Transverse colon (tissue), 4 donors: ENCODE measurements at regions of chr18 and their contacts with region 1.

Region 1: GRCh38 chr18:36977121-36977520 is 148.2 kb downstream of the KIAA1328 start:
- DNase-seq: no peak
- H3K4me3 ChIP-seq: no peak overlapping the region
- H3K27ac ChIP-seq: no peak overlapping the region
- H3K4me1 ChIP-seq: no peaks in the 10 kb centered on the region
- H3K27me3 ChIP-seq: no peaks in the 10 kb centered on the region
- CTCF ChIP-seq: no peak
- EP300 ChIP-seq: no peak
- POLR2A ChIP-seq: no peak

Region 2: GRCh38 chr18:35892118-35892517 is 1085.0 kb before region 1 on chr18:
- in situ Hi-C with region 1: no loop called
- intact Hi-C with region 1: no loop called
- DNase-seq: no peak
- H3K4me3 ChIP-seq: no peak overlapping the region
- H3K27ac ChIP-seq: no peak overlapping the region
- H3K4me1 ChIP-seq: no peaks in the 10 kb centered on the region
- H3K27me3 ChIP-seq: no peaks in the 10 kb centered on the region
- CTCF ChIP-seq: no peak
- EP300 ChIP-seq: no peak
- POLR2A ChIP-seq: no peak

Region 3: DNA sequence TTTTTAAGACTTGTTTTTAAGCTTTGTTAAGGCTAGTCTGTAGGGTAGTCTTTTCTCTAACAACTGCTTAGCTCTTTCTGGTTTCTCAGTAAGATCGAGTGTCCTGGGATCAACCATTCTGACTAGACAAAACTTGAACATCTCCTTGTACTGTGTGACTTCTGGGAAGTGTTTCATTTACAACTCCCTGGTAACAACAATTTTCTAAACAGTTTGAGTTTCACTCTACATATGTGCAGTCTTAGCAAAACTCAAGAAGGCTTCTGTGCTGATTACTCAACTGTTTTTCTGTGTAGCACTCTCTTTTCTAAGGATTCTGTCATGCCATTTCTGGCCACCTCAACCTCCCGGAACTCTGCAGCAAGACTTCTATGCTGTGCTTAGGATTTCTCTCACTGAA is 56.3 kb after region 1 on chr18:
- in situ Hi-C with region 1: loop called in 1 of 4 experiments (anchors 10 kb)
- intact Hi-C with region 1: no loop called
- DNase-seq: no peak
- H3K4me3 ChIP-seq: no peak overlapping the region
- H3K27ac ChIP-seq: no peak overlapping the region
- H3K4me1 ChIP-seq: no peaks in the 10 kb centered on the region
- H3K27me3 ChIP-seq: no peaks in the 10 kb centered on the region
- CTCF ChIP-seq: no peak
- EP300 ChIP-seq: no peak
- POLR2A ChIP-seq: no peak

Region 4: DNA sequence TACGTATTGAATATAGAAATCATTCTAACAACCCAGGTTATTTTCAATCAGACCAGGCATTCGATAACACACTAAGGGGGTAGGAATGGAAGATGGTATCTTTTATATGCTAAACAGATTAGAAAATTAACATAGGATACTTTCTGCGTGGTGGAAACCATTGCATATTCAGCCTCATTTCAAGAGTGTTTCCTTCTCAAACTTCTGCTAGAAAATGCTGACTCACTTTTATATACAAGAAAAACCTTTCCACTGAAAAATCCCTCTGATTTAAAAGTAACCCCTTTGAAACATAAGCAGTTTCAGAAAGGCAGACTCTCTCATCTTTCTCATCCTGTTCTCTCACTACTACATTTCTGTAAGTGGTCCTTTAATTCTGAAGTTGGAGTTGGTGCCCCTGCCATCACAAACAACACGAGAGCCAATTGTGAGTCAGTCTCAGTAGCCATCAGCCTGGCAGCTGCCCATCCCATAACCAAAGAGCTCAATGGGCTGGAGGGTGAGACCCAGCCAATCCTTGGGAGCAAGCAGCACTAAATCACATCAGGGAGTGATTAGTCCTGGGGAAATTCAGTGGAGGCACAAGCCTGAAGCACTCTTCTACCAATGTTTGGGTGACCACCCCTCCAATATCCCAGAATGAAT is 245.4 kb after region 1 on chr18:
- in situ Hi-C with region 1: no loop called
- intact Hi-C with region 1: no loop called
- DNase-seq: no peak
- H3K4me3 ChIP-seq: no peak overlapping the region
- H3K27ac ChIP-seq: no peak overlapping the region
- H3K4me1 ChIP-seq: no peaks in the 10 kb centered on the region
- H3K27me3 ChIP-seq: no peaks in the 10 kb centered on the region
- CTCF ChIP-seq: no peak
- EP300 ChIP-seq: no peak
- POLR2A ChIP-seq: no peak

Region 5: DNA sequence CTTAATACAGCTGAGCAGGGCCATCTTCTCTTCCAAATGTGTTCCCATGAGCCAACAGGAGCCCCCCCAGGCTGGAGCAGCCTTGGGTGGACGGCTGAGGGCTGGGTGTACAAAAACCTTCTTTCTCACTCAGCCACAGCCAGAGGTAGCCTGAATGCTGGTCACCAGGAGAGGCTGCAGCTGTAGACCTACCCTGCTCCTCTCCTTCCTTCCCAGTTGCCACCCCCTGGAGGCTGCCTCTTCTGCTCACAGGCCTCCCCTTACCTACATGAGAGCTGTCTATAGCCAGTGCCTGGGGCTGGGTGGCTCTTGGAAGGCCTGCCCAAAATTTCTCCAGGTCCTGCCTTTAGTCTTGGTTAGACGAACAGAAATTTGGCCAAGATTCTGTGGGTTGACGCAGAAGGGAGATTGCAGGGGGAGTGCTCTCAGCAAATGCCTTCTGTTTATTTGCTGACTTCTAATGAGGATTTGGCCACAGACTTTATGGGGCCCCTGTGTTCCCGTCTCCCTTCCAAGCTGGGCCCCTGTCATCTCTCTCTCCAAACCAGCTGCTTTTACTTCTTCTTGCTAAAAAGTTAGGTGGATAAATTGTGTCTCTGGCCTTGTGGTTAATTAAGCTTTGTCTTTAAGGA is 570.2 kb after region 1 on chr18:
- in situ Hi-C with region 1: no loop called
- intact Hi-C with region 1: no loop called
- DNase-seq: no peak
- H3K4me3 ChIP-seq: no peak overlapping the region
- H3K27ac ChIP-seq: no peak overlapping the region
- H3K4me1 ChIP-seq: no peaks in the 10 kb centered on the region
- H3K27me3 ChIP-seq: no peaks in the 10 kb centered on the region
- CTCF ChIP-seq: no peak
- EP300 ChIP-seq: no peak
- POLR2A ChIP-seq: no peak